Testis (tissue), 5 donors: ENCODE measurements at regions of chr10 and their contacts with region 1.

Region 1: GRCh38 chr10:103776878-103777591 is 78.3 kb downstream of the SH3PXD2A start:
- DNase-seq: no peak
- H3K4me3 ChIP-seq: no peak overlapping the region
- H3K27ac ChIP-seq: no peak overlapping the region
- H3K4me1 ChIP-seq: peaks cover 16% of the 10 kb centered on the region
- H3K27me3 ChIP-seq: no peaks in the 10 kb centered on the region
- CTCF ChIP-seq: no peak
- POLR2A ChIP-seq: no peak

Region 2: GRCh38 chr10:103678178-103678526 is 98.9 kb before region 1 on chr10:
- intact Hi-C with region 1: no loop called
- DNase-seq: peak; percentile 88
- H3K4me3 ChIP-seq: no peak overlapping the region
- H3K27ac ChIP-seq: peak overlapping the region; percentile 73 to 84
- H3K4me1 ChIP-seq: peaks cover 23% of the 10 kb centered on the region
- H3K27me3 ChIP-seq: no peaks in the 10 kb centered on the region
- CTCF ChIP-seq: no peak
- POLR2A ChIP-seq: no peak

Region 3: GRCh38 chr10:103869336-103869735 is 92.3 kb after region 1 on chr10:
- intact Hi-C with region 1: loop called (anchors 5 kb)
- DNase-seq: no peak
- H3K4me3 ChIP-seq: no peak overlapping the region
- H3K27ac ChIP-seq: no peak overlapping the region
- H3K4me1 ChIP-seq: no peaks in the 10 kb centered on the region
- H3K27me3 ChIP-seq: no peaks in the 10 kb centered on the region
- CTCF ChIP-seq: no peak
- POLR2A ChIP-seq: no peak

Region 4: DNA sequence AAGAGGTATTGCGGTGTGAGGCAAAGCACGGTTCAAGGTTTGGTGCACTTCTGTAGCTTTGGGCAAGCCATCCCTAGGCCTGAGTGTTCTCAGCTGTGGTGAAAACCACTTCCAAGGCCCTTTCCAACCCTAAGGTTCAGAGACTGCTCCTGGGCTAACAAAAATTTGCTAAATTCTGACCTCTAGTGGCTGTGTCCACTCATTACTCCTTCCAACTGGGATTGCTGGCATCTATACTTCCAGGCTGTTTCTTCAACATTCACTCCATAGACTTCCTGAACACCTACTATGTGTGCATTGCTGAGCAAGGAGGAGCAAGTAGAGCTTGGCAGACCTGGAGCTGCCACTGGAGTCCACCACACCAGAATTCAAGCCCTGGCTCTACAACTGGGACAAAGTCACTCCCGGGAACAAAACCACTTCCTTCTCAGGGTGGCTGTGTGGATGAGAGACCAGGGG is 107.7 kb after region 1 on chr10:
- intact Hi-C with region 1: no loop called
- DNase-seq: peak; percentile 50
- H3K4me3 ChIP-seq: no peak overlapping the region
- H3K27ac ChIP-seq: peak overlapping the region in 1 of 2 donors; percentile 15
- H3K4me1 ChIP-seq: peaks cover 12% of the 10 kb centered on the region
- H3K27me3 ChIP-seq: no peaks in the 10 kb centered on the region
- CTCF ChIP-seq: peak; percentile 69 to 90 (median 73)
- POLR2A ChIP-seq: no peak